ENCODE measurements at regions of chr3 and their contacts with region 1.

Region 1: DNA sequence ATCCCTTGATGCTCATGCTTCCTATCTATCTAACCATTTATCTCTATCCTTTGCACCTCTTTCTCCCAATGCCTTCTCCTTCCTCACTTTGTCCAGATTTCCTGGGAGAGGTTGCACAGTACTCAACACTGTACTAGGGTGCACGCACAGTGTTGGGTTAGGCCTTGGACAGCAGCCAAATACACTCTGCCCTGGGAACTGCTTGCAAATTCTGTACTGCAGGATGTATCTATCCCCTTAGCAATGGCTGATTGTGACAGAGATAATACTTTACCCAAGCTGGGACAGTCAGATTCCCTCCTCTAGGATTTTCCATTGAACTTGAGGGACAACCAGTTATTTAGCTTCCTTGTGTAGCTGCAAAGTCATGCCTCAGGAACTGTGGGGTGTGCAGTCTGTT is 113.3 kb downstream of the IL20RB start:
- DNase-seq: no peak
- ATAC-seq: no peak
- H3K4me3 ChIP-seq: no peak overlapping the region
- H3K4me3 Mint-ChIP-seq: no peak overlapping the region
- H3K27ac ChIP-seq: no peak overlapping the region
- H3K27ac Mint-ChIP-seq: no peak overlapping the region
- H3K4me1 ChIP-seq: no peaks in the 10 kb centered on the region
- H3K4me1 Mint-ChIP-seq: no peaks in the 10 kb centered on the region
- H3K27me3 ChIP-seq: no peaks in the 10 kb centered on the region
- H3K27me3 Mint-ChIP-seq: peaks cover 11 to 25% (median 15%) of the 10 kb centered on the region in 5 donors

Region 2: DNA sequence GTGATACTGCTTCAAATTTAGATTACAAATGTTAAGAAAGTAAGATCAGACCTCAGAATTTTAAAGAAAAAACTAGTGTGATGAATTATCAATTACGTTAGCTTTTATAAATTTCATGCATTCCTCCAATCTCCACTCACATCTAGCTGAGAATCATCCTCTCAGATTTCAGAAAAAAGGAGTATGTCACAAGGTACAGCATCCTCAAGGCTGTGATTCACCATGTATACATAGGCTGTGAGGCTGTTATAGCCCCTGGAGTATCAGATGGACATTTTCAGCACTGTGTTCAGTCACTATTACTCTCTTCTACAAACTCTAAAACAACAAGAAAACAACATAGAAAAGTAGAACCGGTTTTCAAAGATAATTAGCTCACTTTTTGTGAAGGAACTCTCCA is 606.6 kb before region 1 on chr3:
- CTCF ChIA-PET with region 1: no interaction called
- POLR2A ChIA-PET with region 1: no interaction called
- intact Hi-C with region 1: no loop called
- DNase-seq: no peak
- ATAC-seq: no peak
- H3K4me3 ChIP-seq: no peak overlapping the region
- H3K4me3 Mint-ChIP-seq: no peak overlapping the region
- H3K27ac ChIP-seq: no peak overlapping the region
- H3K27ac Mint-ChIP-seq: no peak overlapping the region
- H3K4me1 ChIP-seq: no peaks in the 10 kb centered on the region
- H3K4me1 Mint-ChIP-seq: peaks cover 0 to 11% (median 7%) of the 10 kb centered on the region in 7 donors
- H3K27me3 ChIP-seq: no peaks in the 10 kb centered on the region
- H3K27me3 Mint-ChIP-seq: no peaks in the 10 kb centered on the region

Region 3: GRCh38 chr3:136694321-136694720 is 376.8 kb before region 1 on chr3:
- CTCF ChIA-PET with region 1: no interaction called
- POLR2A ChIA-PET with region 1: interaction called, 10 read pairs
- intact Hi-C with region 1: no loop called
- DNase-seq: no peak
- ATAC-seq: peak; percentile 71
- H3K4me3 ChIP-seq: no peak overlapping the region
- H3K4me3 Mint-ChIP-seq: peak overlapping the region in 6 of 10 donors; percentile 0 to 66 (median 20)
- H3K27ac ChIP-seq: no peak overlapping the region
- H3K27ac Mint-ChIP-seq: no peak overlapping the region
- H3K4me1 ChIP-seq: peaks cover 0 to 43% of the 10 kb centered on the region in 2 donors
- H3K4me1 Mint-ChIP-seq: peaks cover 18 to 58% (median 38%) of the 10 kb centered on the region in 7 donors
- H3K27me3 ChIP-seq: no peaks in the 10 kb centered on the region
- H3K27me3 Mint-ChIP-seq: no peaks in the 10 kb centered on the region

Region 4: DNA sequence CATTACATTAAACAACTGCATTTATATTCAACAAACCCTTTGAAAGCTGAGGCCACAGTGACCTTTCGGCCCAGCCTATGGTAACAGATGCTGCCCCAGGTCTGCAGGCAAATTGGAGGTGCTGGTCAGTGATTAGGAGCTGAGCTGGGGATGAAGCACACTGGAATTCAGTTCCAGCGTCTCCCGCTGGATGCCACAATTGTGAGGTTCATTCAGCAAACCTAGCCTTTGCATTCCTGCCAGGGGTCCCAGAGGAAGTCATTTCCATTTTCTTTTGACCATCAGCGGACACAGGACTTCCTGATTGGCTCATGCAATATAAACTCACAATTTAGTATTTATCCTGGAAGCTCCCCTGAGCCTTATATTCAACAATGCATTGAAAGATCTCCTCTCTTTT is 23.9 kb before region 1 on chr3:
- CTCF ChIA-PET with region 1: no interaction called
- POLR2A ChIA-PET with region 1: no interaction called
- intact Hi-C with region 1: no loop called
- DNase-seq: no peak
- ATAC-seq: no peak
- H3K4me3 ChIP-seq: no peak overlapping the region
- H3K4me3 Mint-ChIP-seq: no peak overlapping the region
- H3K27ac ChIP-seq: no peak overlapping the region
- H3K27ac Mint-ChIP-seq: no peak overlapping the region
- H3K4me1 ChIP-seq: no peaks in the 10 kb centered on the region
- H3K4me1 Mint-ChIP-seq: no peaks in the 10 kb centered on the region
- H3K27me3 ChIP-seq: no peaks in the 10 kb centered on the region
- H3K27me3 Mint-ChIP-seq: peaks cover 0 to 22% (median 7%) of the 10 kb centered on the region in 5 donors